ENCODE measurements at regions of chr13 and their contacts with region 1.

Region 1: GRCh38 chr13:46492946-46493345 is 60.0 kb upstream of the LRCH1 start:
- DNase-seq: no peak
- ATAC-seq: no peak
- H3K4me3 Mint-ChIP-seq: no peak overlapping the region
- H3K27ac Mint-ChIP-seq: no peak overlapping the region
- H3K4me1 Mint-ChIP-seq: no peaks in the 10 kb centered on the region
- H3K27me3 Mint-ChIP-seq: peaks cover 1% of the 10 kb centered on the region
- CTCF ChIP-seq: peak; percentile 75

Region 2: GRCh38 chr13:46721054-46721453 is 228.1 kb after region 1 on chr13:
- CTCF ChIA-PET with region 1: interaction called, 15 read pairs
- POLR2A ChIA-PET with region 1: no interaction called
- intact Hi-C with region 1: loop called (anchors 5 kb)
- DNase-seq: peak; percentile 65
- ATAC-seq: peak; percentile 53
- H3K4me3 Mint-ChIP-seq: no peak overlapping the region
- H3K27ac Mint-ChIP-seq: no peak overlapping the region
- H3K4me1 Mint-ChIP-seq: no peaks in the 10 kb centered on the region
- H3K27me3 Mint-ChIP-seq: no peaks in the 10 kb centered on the region
- CTCF ChIP-seq: peak; percentile 85

Measured in activated CD8-positive, alpha-beta T cell treated with anti-CD3 and anti-CD28 coated beads for 36 hours (primary cell).